ENCODE measurements at regions of chr4 and their contacts with region 1.

Region 1: DNA sequence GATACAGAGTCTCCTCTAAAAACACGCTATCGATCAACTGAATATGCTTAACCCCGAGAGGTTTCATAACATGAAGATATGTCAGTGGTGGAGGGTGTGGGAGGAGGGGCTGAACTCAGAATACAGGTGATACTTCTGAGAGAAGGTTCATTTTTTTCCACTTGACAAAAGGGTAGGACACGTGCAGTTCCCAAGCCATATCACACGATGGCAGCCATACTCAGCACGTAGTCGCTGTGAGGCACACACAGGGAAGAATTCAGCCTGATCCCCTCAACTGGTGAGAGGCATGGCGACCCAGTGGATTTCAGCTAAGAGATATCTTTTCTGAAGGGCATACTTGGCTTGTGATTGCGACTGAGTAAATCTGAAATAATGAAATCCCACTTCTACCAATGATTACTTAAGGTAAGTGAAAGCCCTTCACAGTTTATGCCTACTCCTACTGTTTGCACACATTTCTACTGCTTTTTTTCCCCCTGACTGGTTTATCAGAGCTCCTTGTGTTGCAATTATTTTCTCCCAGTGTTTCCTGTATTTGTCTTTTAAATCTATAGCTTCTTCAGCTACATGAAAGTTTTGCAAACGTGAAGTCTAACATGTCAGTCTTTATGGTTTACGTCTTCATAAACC is 133.1 kb downstream of the CORIN start:
- DNase-seq: peak in 1 of 2 experiments; percentile 19
- H3K4me3 ChIP-seq: no peak overlapping the region
- H3K27ac ChIP-seq: no peak overlapping the region
- H3K4me1 ChIP-seq: no peaks in the 10 kb centered on the region
- H3K27me3 ChIP-seq: no peaks in the 10 kb centered on the region
- CTCF ChIP-seq: peak; percentile 71 to 86 (median 83)
- EP300 ChIP-seq: no peak
- POLR2A ChIP-seq: no peak
- RAD21 ChIP-seq: peak; percentile 89 to 91

Region 2: DNA sequence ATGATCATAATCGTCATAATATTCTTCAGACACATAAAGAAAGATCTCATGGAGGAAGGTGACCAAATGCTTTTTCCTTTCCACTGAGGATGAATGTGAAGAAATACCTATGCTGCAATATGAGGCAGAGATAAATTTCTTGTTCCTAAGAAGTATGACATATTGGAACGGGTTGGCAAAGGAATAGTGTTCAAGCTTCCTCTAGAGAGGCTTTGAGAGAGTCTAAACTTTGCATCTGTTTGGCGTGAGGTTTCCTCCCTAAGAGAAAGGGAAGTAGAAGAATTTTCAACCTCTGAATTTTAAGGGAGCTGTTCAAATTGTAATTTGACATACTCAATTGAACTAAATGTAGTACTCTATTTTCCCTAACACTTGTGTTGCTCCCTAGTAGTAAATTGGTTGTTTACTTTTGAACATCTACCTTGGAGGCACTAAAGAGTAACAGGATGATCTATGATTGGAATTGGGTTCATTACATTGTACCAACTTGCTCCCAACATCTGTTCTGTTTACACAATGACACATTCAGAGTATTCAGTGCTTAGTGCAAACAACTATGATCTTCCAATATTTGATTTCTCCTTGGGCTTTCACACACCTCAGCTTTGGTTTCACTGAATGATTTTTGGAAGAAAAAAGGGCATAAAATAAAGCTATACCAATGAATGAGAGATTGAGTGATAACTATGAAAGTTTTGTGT is 11.1 kb after region 1 on chr4:
- CTCF ChIA-PET with region 1: interaction called, 30 read pairs
- POLR2A ChIA-PET with region 1: no interaction called
- DNase-seq: no peak
- H3K4me3 ChIP-seq: no peak overlapping the region
- H3K27ac ChIP-seq: no peak overlapping the region
- H3K4me1 ChIP-seq: peaks cover 0 to 7% (median 4%) of the 10 kb centered on the region in 4 experiments; a peak in 4 of 7 replicates
- H3K27me3 ChIP-seq: peaks cover 0 to 2% (median under 1%) of the 10 kb centered on the region in 4 experiments; a peak in 2 of 7 replicates
- CTCF ChIP-seq: no peak
- EP300 ChIP-seq: no peak
- POLR2A ChIP-seq: no peak
- RAD21 ChIP-seq: no peak

Region 3: GRCh38 chr4:47737326-47737725 is 32.5 kb after region 1 on chr4:
- CTCF ChIA-PET with region 1: interaction called, 23 read pairs
- POLR2A ChIA-PET with region 1: no interaction called
- DNase-seq: no peak
- H3K4me3 ChIP-seq: no peak overlapping the region
- H3K27ac ChIP-seq: no peak overlapping the region
- H3K4me1 ChIP-seq: no peaks in the 10 kb centered on the region
- H3K27me3 ChIP-seq: no peaks in the 10 kb centered on the region
- CTCF ChIP-seq: no peak
- EP300 ChIP-seq: no peak
- POLR2A ChIP-seq: no peak
- RAD21 ChIP-seq: no peak

Region 4: GRCh38 chr4:47752214-47752613 is 47.4 kb after region 1 on chr4:
- CTCF ChIA-PET with region 1: no interaction called
- POLR2A ChIA-PET with region 1: no interaction called
- DNase-seq: no peak
- H3K4me3 ChIP-seq: no peak overlapping the region
- H3K27ac ChIP-seq: no peak overlapping the region
- H3K4me1 ChIP-seq: no peaks in the 10 kb centered on the region
- H3K27me3 ChIP-seq: no peaks in the 10 kb centered on the region
- CTCF ChIP-seq: no peak
- EP300 ChIP-seq: no peak
- POLR2A ChIP-seq: no peak
- RAD21 ChIP-seq: no peak

Region 5: DNA sequence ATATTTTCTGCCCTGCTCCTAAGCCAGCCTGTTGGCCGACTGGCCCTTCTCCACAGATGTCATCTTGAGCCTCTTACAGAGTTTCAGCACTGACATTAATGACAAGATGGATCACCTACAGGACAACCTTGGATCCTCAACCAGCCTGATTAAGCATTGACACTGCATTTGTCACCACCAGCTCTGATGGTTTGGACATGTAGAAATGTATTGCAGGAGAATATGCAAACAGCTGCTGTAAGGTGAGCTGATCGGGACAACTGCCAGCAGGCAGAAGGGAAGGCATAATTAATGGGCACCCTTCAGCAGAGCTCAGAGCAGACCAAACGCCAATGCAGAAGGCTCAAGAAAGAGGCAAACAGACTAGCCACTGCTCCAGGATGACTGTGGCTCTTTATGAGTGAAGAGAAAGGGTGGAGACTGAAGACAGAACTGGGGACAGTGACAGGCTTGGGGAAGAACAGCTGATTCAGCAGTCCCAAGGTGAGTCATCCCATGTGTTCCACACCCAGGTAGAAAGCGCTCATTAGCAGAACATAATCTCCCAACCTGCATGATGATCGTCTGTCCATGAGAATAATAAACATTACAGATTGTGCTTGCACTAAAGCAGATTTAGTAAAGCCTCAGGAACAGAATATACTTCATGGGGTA is 126.3 kb after region 1 on chr4:
- CTCF ChIA-PET with region 1: interaction called, 282 read pairs
- POLR2A ChIA-PET with region 1: interaction called, 3 read pairs
- DNase-seq: no peak
- H3K4me3 ChIP-seq: no peak overlapping the region
- H3K27ac ChIP-seq: no peak overlapping the region
- H3K4me1 ChIP-seq: peaks cover 0 to 3% (median 0%) of the 10 kb centered on the region in 4 experiments; a peak in 2 of 7 replicates
- H3K27me3 ChIP-seq: peaks cover 0 to 8% (median 3%) of the 10 kb centered on the region in 4 experiments; a peak in 1 of 7 replicates
- CTCF ChIP-seq: no peak
- EP300 ChIP-seq: no peak
- POLR2A ChIP-seq: no peak
- RAD21 ChIP-seq: no peak

Region 6: DNA sequence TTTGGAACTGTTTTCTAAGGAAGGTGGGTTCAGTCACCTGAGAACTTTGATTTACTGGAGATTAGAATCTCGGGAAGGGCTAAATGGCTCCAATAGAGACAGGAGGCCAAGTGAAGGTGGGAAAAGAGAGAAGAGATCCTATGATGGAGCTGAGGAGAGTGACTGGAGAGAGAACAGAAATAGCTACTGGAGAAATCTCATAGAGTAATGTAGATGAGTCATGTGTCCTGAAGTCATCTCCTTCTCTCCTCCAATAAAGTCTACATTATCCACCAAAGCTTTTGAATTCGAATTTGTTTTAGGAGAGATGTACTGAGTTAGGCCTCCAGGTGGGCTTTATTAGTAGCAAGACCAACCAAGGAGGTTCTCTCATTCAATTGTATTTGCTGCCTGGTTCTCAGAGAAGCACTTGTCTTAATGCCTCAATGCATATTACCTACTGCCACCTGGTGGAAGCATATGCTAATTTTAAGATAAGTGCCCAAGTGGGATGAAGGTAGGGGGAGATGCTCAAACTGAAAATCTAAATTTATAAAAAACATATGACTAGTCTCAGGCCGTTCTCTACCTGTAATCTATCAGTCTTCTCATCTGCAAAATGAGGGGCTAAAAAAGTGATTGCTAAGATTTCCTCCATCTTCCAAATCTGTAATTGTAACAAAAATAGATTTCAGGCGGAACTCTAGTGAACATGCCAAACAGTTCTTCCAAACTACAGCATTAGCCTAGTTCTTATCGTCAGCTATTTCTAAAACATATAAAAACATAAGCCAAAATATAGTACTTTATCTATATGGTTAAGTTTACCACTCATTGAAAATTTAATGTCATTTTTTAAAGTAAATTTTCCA is 404.8 kb after region 1 on chr4:
- CTCF ChIA-PET with region 1: no interaction called
- POLR2A ChIA-PET with region 1: no interaction called
- DNase-seq: no peak
- H3K4me3 ChIP-seq: no peak overlapping the region
- H3K27ac ChIP-seq: no peak overlapping the region
- H3K4me1 ChIP-seq: peaks cover 0 to 3% (median 0%) of the 10 kb centered on the region in 4 experiments; a peak in 2 of 7 replicates
- H3K27me3 ChIP-seq: no peaks in the 10 kb centered on the region
- CTCF ChIP-seq: peak in 2 of 3 experiments; percentile 55 to 68; a peak in 3 of 4 replicates
- EP300 ChIP-seq: no peak
- POLR2A ChIP-seq: no peak
- RAD21 ChIP-seq: peak; percentile 58 to 67